Activated CD4-positive, alpha-beta T cell treated with anti-CD3 and anti-CD28 coated beads, Interleukin-2, amount 10 ng/mL, durations not matched to agents 24 days and 14 days (primary cell): ENCODE measurements at regions of chr12 and their contacts with region 1.

Region 1: DNA sequence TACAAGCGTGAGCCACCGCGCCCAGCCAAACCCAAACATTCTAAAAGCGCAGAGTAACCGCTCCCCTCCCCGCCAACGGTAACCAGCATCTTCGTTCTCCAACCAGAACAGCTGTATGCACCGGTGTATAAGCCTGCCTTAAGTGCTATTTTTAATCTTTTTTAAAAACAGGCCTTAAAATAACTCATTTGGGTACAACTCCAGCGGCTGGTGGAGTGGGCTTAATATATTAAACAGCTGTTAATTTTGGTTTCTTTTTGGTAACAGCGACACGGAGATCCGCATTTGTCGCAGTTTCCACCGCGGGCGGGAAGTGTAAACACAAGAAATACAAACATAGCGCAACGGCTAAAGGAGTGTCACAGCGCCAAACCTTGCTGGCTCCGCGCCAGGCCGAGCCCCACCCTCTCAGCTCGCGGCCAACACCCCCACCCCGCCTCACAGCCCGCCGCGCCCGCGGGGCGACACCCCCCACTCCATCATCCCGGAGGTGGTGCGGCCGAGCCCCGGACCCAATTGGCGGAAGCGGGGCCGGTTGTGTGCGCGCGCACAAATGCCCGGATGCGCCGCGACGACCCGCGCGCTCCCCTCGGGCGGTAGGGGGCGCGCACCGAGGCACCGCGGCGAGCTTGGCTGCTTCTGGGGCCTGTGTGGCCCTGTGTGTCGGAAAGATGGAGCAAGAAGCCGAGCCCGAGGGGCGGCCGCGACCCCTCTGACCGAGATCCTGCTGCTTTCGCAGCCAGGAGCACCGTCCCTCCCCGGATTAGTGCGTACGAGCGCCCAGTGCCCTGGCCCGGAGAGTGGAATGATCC is at the start of gene MDM2:
- DNase-seq: peak; percentile 99
- H3K4me3 Mint-ChIP-seq: peak within 1 kb of the TSS; percentile 90
- H3K27ac Mint-ChIP-seq: peak within 1 kb of the TSS; percentile 98
- H3K4me1 Mint-ChIP-seq: peaks cover 25% of the 10 kb centered on the region
- H3K27me3 Mint-ChIP-seq: peaks cover 3% of the 10 kb centered on the region
- total RNA-seq, gene MDM2: 227 and 233 TPM in 2 replicates

Region 2: DNA sequence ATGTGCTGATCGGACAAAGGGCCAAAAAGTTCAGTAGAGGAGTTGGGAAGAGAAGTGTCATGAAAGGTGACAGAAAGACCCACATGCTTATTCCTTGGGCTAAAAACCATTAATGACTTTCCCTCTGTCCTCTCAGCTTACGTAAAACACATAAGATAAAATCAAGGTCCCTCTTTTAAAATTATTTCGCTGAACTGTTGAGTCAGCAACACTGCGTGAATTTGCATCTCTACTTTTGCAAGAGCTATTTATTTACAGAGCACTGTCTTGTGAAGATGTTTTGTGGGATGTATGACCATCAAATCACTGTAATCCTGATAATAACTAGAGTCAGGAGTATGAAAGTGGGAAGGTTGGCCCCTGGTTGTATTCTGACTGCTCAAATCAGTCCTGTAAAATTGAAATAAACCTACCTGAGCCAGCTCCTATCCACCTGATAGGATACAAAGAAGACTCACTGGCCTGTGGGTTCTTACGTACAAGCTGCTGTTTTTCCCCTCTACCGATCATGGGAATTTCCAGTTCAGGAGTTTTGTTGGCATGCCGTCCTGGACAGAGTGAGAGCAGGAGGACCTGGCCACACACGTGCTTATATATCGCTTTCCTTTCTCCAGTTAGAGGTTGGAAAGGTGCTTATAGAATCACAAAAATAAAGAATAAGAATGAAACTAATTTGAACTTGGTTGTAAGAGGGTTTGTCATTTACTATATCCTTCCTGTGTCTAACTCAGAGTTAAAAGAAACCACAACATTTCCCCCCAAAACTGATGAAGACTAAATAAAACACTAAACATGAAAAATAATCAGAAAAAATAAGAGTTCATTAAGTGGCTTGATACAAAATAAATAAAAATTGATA is 775.7 kb before region 1 on chr12:
- intact Hi-C with region 1: no loop called
- DNase-seq: no peak
- H3K4me3 Mint-ChIP-seq: peak overlapping the region; percentile 43
- H3K27ac Mint-ChIP-seq: peak overlapping the region; percentile 73
- H3K4me1 Mint-ChIP-seq: peaks cover 29% of the 10 kb centered on the region
- H3K27me3 Mint-ChIP-seq: no peaks in the 10 kb centered on the region

Region 3: DNA sequence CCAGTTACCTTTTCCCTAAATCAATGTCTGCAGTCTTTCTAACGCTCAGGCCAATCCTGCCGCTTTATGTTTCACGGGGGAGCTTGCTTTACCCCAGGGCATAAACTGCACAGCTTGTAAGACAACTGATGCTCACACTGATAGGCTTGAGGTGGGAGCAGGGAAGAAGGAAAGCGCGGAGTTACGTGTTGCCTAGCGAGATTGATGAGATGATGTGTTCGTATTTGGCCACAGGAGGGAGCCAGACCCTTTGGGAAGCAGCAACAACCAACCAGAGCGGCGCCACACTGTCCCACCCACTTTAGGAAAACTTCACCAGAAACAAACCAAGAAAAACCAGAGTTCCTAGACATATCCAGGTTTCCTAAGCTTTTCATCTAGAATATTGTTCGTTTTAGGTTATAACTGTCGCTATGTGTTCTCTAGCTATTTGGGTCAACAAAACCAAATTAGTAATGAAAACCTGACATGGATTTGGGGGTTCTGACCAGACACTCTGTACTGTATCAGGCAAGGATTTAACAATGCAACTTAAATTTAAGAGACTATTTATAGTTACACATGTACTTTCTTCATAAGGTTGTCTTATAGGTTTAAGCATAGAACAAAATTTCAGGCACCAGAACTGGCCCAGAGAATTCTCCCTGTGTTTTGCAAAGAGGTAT is 584.6 kb before region 1 on chr12:
- intact Hi-C with region 1: loop called (anchors 10 kb)
- DNase-seq: peak; percentile 91
- H3K4me3 Mint-ChIP-seq: peak overlapping the region; percentile 75
- H3K27ac Mint-ChIP-seq: peak overlapping the region; percentile 81
- H3K4me1 Mint-ChIP-seq: peaks cover 17% of the 10 kb centered on the region
- H3K27me3 Mint-ChIP-seq: peaks cover 14% of the 10 kb centered on the region

Region 4: DNA sequence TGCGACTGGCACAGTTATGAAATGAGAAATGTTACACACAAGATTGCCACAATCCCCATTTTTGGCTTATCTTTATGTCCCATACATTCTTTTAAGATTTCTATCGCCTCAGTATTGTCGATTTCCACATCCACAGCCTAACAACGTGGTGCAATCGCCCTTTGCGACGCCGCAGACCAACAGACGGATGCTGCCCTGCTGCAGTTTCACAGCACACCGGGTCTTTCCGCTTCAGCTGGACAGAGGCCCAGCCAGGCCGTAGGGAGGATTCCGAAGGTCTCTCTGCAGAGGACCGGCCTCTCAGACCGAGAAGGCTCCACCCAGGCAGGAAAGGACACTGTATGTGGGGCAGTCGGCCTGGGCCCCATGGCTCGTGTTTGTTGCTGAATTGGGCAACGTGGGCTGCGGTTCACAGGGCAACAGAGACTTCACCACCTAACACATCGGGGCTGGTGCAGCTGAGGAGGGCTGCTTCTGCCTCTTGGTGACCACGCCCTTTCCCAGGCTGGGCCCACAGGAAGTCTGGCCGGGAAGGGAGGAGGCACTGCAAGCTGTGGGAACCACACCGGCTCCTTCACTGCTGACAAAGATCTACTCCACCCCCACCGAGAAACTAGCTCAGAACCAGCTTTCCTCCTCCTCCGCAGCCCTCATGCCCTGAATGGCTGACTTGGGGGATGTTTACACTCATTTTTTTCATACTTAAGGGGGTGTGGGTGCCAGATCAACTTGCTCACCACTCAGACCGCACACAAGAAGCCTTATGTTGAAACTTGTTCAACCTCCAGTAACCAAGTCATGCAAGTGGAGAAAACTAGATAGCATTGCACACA is 442.7 kb before region 1 on chr12:
- intact Hi-C with region 1: loop called (anchors 2 kb)
- DNase-seq: peak; percentile 95
- H3K4me3 Mint-ChIP-seq: peak overlapping the region; percentile 83
- H3K27ac Mint-ChIP-seq: peak overlapping the region; percentile 95
- H3K4me1 Mint-ChIP-seq: peaks cover 56% of the 10 kb centered on the region
- H3K27me3 Mint-ChIP-seq: no peaks in the 10 kb centered on the region

Region 5: GRCh38 chr12:68610370-68611093 is 197.2 kb before region 1 on chr12 and contains the start of gene RAP1B:
- intact Hi-C with region 1: loop called (anchors 2 kb)
- DNase-seq: peak; percentile 97
- H3K4me3 Mint-ChIP-seq: peak within 1 kb of the TSS; percentile 99
- H3K27ac Mint-ChIP-seq: peak within 1 kb of the TSS; percentile 98
- H3K4me1 Mint-ChIP-seq: peaks cover 37% of the 10 kb centered on the region
- H3K27me3 Mint-ChIP-seq: no peaks in the 10 kb centered on the region
- total RNA-seq, gene RAP1B: 207 and 209 TPM in 2 replicates

Region 6: DNA sequence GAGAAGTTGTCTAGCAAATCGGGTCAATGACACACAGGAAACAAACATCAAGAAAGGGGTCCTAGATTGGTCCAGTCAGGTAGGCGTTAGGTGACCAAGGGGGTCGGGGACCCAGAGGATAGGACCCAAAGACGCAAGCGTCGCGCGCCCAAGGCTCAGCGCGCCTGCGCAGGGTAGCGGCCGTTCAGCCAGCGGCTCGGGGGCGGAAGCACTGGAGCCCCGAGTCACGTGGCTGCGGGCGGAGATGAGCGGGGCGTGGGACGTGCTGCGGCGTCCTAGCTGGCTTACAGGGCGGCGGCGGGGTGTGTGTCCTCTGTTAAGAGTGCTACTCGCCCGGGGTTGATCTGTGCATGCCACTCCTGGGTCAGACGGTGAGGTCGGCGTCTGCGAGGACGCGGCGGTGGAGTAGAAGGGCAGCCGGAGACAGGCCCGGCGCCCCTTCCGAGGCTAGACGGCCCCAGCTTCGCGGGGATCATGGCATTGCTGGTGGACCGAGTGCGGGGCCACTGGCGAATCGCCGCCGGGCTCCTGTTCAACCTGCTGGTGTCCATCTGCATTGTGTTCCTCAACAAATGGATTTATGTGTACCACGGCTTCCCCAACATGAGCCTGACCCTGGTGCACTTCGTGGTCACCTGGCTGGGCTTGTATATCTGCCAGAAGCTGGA is 61.7 kb before region 1 on chr12 and contains the start of gene SLC35E3:
- intact Hi-C with region 1: loop called (anchors 1 kb)
- DNase-seq: peak; percentile 98
- H3K4me3 Mint-ChIP-seq: peak within 1 kb of the TSS; percentile 93
- H3K27ac Mint-ChIP-seq: peak within 1 kb of the TSS; percentile 80
- H3K4me1 Mint-ChIP-seq: peaks cover 38% of the 10 kb centered on the region
- H3K27me3 Mint-ChIP-seq: no peaks in the 10 kb centered on the region
- total RNA-seq, gene SLC35E3: 3.8 and 4.2 TPM in 2 replicates

Region 7: DNA sequence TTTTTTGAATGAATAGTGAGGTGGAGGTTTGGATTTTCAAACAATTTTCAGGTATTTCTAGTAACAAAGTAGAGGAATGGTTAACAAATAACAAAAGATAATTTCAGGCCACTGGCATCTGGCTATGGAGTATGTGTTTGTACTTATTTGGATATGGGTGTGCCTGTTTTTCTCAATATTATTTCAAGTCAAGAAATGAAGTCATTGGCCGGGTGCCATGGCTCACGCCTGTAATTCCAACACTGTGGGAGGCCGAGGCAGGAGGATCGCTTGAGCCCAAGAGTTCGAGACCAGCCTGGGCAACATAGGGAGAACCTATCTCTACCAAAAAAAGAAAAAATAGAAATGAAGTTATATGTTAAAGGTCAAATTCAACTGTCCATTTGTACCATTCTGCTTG is 47.9 kb before region 1 on chr12:
- intact Hi-C with region 1: no loop called
- DNase-seq: no peak
- H3K4me3 Mint-ChIP-seq: no peak overlapping the region
- H3K27ac Mint-ChIP-seq: no peak overlapping the region
- H3K4me1 Mint-ChIP-seq: no peaks in the 10 kb centered on the region
- H3K27me3 Mint-ChIP-seq: no peaks in the 10 kb centered on the region

Region 8: GRCh38 chr12:69239352-69239921 is 431.7 kb after region 1 on chr12 and contains the start of gene CPSF6:
- intact Hi-C with region 1: loop called (anchors 2 kb)
- DNase-seq: peak; percentile 99
- H3K4me3 Mint-ChIP-seq: peak within 1 kb of the TSS; percentile 97
- H3K27ac Mint-ChIP-seq: peak within 1 kb of the TSS; percentile 98
- H3K4me1 Mint-ChIP-seq: peaks cover 43% of the 10 kb centered on the region
- H3K27me3 Mint-ChIP-seq: no peaks in the 10 kb centered on the region
- total RNA-seq, gene CPSF6: 114 and 121 TPM in 2 replicates

Region 9: DNA sequence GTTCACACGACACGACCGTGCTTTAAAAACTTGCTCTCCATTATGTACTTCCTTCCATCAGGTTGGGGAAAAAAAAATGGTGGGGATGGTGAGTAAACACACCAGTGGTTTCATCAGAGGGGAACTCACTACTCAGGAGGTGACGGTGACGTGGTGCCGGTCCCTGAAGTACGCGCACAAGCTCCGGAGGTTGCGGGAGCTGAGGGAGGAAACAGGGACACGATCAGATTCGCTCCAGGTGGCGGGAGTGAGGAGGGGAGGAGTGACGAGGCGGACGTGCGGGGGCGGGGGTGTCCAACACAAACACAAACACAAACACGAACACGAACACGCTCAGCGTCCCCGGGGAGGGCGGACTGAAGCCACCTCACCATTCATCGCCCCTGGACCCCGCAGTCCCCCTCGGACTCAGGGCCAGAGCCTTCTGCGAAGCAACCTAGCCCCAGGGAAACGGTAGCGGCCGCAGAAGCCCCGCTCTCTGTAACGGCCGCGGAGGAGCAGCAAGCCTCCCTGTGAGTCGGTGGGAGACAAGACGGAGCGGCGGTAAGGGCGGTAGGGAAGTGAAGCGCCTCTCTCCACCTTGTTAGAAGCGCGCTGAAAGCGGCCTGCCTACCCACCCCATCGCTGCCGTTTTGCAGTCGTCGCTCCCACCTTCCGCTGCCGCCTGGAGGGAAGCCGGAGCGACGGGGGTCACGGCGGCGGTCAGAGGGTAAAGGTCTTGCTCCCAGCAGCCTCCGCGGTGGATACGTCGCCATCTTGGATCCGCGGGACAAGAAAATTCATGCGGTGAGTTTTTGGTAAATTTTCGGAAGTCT is 1435.1 kb after region 1 on chr12 and contains the start of gene CNOT2:
- intact Hi-C with region 1: loop called (anchors 5 kb)
- DNase-seq: peak; percentile 96
- H3K4me3 Mint-ChIP-seq: peak within 1 kb of the TSS; percentile 94
- H3K27ac Mint-ChIP-seq: peak within 1 kb of the TSS; percentile 99
- H3K4me1 Mint-ChIP-seq: peaks cover 47% of the 10 kb centered on the region
- H3K27me3 Mint-ChIP-seq: no peaks in the 10 kb centered on the region
- total RNA-seq, gene CNOT2: 65.6 and 74.4 TPM in 2 replicates